ENCODE measurements at regions of chr11 and their contacts with region 1.

Region 1: DNA sequence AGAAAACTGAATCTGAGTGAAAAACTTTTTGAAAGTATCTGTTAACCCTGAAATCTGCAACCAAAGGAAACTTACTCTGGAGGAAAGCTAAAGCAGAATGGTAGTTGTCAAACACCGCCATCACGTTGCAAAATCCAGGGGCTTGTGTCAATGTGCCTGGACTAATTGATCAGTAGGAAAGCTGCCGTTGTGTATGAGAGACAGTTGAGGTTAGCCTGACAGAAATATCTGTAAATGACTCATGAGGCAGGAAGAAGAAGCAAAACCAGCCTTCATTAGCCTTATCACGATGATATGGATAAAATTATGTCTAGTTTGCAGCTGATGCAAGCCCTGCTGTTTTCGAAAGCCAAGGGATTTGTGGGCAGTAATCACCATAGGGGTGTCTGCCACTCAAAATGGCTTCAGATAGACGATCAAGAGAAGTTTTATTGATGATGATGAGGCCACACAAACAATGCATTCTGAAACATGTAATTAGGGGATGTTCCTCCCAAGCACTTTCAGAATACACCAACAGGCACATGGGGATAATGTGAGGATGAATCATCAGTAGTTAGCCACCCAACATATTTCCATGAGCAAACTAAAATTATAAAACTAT is 8.9 kb downstream of the SCGB1A1 start:
- DNase-seq: no peak
- H3K4me3 ChIP-seq: no peak overlapping the region
- H3K27ac ChIP-seq: peak overlapping the region; percentile 80
- H3K27me3 ChIP-seq: no peaks in the 10 kb centered on the region
- CTCF ChIP-seq: no peak

Region 2: GRCh38 chr11:62013591-62014476 is 413.9 kb before region 1 on chr11:
- CTCF ChIA-PET with region 1: no interaction called
- POLR2A ChIA-PET with region 1: no interaction called
- DNase-seq: no peak
- H3K4me3 ChIP-seq: no peak overlapping the region
- H3K27ac ChIP-seq: no peak overlapping the region
- H3K27me3 ChIP-seq: no peaks in the 10 kb centered on the region
- CTCF ChIP-seq: no peak

Region 3: DNA sequence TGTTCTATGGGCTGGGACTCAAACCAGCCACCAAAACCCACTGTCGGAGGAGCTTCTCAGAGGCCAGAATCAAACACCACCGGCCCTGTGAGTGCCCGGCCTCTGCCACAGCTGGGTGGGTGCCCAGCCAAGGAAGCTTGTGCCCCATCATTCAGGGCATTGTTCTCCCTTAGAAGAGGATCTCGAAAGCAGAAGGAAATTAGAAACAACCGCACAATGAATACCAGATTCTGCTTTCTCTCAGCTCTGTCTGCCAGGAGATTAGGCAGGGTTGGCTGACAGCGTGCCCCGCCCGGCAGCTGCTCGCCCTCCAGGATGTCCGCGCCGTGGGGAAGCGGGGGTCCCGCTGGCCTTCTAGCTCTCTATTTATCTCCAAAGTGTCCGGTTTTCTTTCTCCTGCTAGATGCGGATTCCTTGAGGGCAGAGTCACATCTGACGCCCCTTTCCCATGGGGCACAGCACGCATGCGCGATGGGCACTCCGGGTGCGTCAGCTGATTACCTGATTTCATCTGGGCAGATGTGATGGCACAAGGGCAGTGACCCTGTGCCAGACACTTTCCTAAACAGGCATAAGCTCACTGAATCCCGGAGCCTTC is 16.6 kb after region 1 on chr11:
- CTCF ChIA-PET with region 1: interaction called, 24 read pairs
- POLR2A ChIA-PET with region 1: interaction called, 3 read pairs
- DNase-seq: peak; percentile 38
- H3K4me3 ChIP-seq: peak overlapping the region; percentile 53
- H3K27ac ChIP-seq: peak overlapping the region; percentile 87
- H3K27me3 ChIP-seq: no peaks in the 10 kb centered on the region
- CTCF ChIP-seq: no peak

Region 4: DNA sequence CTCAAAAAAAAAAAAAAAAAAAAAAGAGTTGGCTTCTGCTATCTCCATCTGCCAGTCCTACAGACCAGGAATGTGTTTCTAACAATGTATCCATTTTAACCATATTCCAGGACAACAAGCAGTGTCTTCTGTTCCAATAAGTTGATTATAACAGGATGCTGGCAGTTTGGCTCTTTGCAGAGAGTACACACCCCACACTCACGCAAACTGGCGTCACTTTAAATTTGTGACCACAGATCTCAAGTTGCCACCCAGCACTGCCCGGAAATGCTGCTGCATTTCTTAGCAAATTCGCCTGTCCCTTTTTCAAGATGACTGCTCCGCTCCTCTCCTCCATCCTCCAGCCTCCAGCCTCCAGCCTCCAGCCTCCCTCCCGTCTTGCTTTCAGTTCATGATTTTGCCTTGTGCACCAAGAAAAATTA is 35.4 kb after region 1 on chr11:
- CTCF ChIA-PET with region 1: interaction called, 10 read pairs
- POLR2A ChIA-PET with region 1: no interaction called
- DNase-seq: no peak
- H3K4me3 ChIP-seq: no peak overlapping the region
- H3K27ac ChIP-seq: no peak overlapping the region
- H3K27me3 ChIP-seq: no peaks in the 10 kb centered on the region
- CTCF ChIP-seq: no peak

Region 5: DNA sequence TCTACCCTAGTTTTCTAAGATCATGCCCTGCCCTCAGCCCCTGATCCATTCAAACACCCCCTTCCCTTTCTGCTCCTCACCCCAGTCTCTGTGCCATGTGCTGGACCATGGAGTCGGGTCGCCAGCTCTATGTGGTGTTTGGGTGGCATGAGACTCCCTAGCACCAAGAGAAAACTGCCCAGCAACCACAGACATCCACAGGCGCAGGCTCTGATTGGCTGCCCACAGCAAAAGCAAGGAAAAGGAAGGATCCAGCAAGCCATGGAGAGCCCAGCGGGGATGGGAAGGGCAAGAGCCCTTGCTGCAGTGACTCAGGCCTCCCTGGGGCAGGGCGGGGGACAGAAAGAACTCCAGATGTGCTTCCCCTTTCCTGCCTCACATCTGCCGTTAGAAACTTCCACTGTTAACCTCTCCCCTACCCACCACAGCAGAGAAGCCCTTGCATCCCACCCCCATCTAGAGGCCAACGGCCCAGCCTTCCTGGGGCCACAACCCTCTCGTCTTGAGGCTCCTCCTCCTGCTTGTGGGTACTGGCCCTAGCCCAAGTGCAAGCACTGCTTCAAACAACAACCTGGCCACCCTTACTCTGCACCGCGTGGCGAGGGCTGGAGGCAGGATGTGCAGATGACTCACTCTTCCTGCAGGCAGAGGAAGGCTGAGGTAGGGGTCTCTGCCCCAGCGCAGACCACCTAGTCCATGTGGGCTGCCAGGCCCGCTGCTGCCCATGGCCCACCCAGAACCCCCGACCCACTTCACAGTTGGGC is 128.6 kb after region 1 on chr11:
- CTCF ChIA-PET with region 1: interaction called, 48 read pairs
- POLR2A ChIA-PET with region 1: interaction called, 6 read pairs
- DNase-seq: peak; percentile 86
- H3K4me3 ChIP-seq: peak overlapping the region; percentile 27
- H3K27ac ChIP-seq: peak overlapping the region; percentile 87
- H3K27me3 ChIP-seq: no peaks in the 10 kb centered on the region
- CTCF ChIP-seq: no peak

Measured in AG04450 (cell line).